Right ventricle myocardium inferior (tissue), 1 donor: ENCODE measurements at regions of chr9 and their contacts with region 1.

Region 1: DNA sequence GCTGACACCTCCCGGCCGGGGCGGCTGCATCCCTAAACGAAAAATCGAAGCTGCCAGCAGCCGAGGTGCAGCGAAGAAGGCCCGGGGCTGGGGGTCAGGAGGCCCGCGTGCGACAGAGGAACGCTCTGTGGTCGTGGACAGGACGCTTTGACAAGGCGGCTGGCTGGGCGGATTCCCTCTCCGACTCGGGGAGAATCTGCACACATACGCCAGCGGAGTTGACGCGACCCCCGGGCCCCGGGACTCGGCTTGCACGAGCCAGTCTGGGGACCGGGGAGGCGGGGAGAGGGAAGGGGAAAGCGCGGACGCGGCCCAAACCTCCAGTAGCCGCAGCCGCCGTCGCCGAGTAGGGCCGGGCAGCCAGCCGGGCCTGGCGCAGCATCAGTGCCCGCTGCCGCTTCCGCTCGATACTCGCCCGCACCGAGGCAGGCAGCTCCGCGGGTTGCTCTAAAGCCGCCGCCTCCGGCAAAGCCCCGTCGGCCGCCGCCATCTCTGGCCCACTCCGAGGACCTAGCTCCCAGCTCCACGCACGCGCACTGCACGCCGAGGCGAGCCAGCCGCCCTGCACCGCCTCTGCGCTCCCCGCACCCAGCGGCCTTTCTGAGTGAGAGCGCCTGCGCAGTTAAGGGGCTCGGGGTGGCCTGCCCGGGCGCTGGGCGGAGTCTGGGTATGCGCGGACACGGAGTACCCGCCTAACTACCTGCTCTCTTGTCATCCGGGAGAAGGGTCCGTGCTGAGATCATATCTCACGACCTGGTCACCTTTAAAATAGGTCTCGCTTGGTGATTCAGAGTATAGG is at the start of gene XPA:
- DNase-seq: peak; percentile 99
- ATAC-seq: peak; percentile 100
- total RNA-seq, gene XPA: 6.4 TPM

Region 2: DNA sequence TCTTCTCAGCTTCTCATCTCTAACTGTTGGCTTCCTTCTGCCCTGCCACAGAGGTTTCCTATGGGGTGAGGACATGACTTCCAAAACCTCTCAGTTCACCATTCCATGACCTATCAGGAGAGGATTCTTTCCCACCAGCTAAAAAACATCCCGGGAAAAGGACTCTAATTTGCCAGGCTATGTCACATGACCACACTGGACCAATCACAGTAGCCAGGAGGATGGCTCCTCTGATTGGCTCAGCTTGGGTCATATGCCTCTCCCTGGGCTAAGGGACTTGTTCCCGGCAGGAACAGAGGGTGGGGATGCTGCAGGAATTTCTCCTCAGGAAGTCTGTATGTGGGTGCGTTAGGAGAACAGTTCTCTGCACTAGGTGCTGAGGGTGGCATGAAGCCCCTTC is 40.4 kb after region 1 on chr9:
- intact Hi-C with region 1: no loop called
- DNase-seq: no peak
- ATAC-seq: no peak

Region 3: GRCh38 chr9:98255578-98256296 is 558.7 kb after region 1 on chr9 and contains the start of gene TBC1D2:
- intact Hi-C with region 1: loop called (anchors 5 kb)
- DNase-seq: peak; percentile 98
- ATAC-seq: peak; percentile 98
- total RNA-seq, gene TBC1D2: 2.3 TPM